ENCODE measurements at regions of chr7 and their contacts with region 1.

Region 1: GRCh38 chr7:30276203-30276900 is 8.0 kb upstream of the ZNRF2 start:
- DNase-seq: peak; percentile 42
- CTCF ChIP-seq: peak; percentile 41

Region 2: GRCh38 chr7:29538389-29538788 is 738.0 kb before region 1 on chr7:
- in situ Hi-C with region 1: no loop called
- DNase-seq: no peak
- CTCF ChIP-seq: no peak

Region 3: GRCh38 chr7:30564243-30564892 is 288.0 kb after region 1 on chr7:
- in situ Hi-C with region 1: loop called (anchors 10 kb)
- DNase-seq: peak; percentile 83
- CTCF ChIP-seq: peak; percentile 83

Measured in GM13976 (cell line).